T-cell (primary cell): ENCODE measurements at regions of chr1 and their contacts with region 1.

Region 1: DNA sequence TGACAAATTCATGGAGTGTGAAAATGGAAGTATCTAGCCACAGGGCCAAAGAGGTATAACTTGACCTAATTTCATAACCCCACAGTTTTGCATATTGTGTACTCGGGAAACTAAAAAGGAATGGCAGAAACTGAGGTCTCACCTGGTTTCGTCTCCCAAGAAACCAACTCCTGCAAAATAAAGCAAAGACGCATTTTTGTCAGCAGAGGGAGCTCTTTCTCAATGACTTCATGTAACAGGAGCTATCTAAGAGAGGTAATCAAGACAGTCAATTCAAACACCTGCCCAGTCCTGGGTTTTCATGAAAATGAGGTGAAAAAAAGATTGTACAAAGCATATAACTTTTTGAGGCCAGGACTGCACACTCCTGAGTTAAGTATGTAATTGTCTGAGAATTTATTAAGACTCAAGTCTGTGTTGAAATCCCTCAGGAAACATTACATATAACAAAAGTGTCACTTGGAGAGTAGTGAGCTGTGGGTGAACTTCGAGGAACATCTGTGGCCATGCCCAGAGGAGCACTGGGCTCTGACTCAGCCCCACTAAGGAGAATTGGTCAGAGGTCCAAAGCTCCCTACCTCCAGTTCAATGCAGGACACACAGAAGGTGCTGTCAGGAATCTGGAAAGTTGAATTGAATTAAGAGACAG is 17.6 kb downstream of the FCRL4 start:
- DNase-seq: peak in 14 of 35 experiments; percentile 2 to 70 (median 12)
- ATAC-seq: no peak
- H3K4me3 ChIP-seq: no peak overlapping the region
- H3K4me3 Mint-ChIP-seq: no peak overlapping the region
- H3K27ac ChIP-seq: no peak overlapping the region
- H3K27ac Mint-ChIP-seq: no peak overlapping the region
- H3K4me1 ChIP-seq: peaks cover 0 to 2% of the 10 kb centered on the region in 2 experiments
- H3K4me1 Mint-ChIP-seq: peaks cover 2 to 4% (median 2%) of the 10 kb centered on the region in 3 donors
- H3K27me3 ChIP-seq: no peaks in the 10 kb centered on the region
- H3K27me3 Mint-ChIP-seq: peaks cover 1 to 11% of the 10 kb centered on the region in 2 donors

Region 2: DNA sequence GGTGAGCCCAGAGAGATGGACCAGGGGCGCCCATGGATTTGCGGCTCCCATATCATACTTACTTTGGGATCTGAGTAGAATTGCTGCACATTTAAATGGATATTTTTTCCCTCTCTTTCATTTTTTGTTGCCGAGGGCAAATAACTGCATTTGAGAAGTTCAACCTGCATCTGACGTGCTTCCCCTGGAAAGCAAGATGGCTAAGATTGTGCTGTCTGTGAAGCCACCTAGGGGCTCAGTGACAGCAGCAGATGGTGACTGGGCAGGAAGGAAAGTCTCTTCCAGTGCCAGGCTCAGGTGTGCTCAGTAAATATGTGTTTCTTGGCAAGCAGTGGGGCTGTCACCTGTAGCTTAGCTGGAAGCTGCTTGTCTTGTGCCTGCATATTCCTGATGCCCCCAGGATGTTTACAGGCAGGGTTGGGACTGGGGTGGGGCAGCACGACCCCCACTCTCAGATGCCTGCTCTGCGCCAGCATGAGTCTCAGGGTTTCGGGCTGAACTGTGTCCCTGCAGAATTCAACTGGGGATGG is 382.3 kb before region 1 on chr1:
- CTCF ChIA-PET with region 1: no interaction called
- POLR2A ChIA-PET with region 1: interaction called in 1 of 2 experiments, 18 read pairs
- DNase-seq: no peak
- ATAC-seq: no peak
- H3K4me3 ChIP-seq: no peak overlapping the region
- H3K4me3 Mint-ChIP-seq: no peak overlapping the region
- H3K27ac ChIP-seq: no peak overlapping the region
- H3K27ac Mint-ChIP-seq: no peak overlapping the region
- H3K4me1 ChIP-seq: no peaks in the 10 kb centered on the region
- H3K4me1 Mint-ChIP-seq: peaks cover 5 to 8% (median 7%) of the 10 kb centered on the region in 3 donors
- H3K27me3 ChIP-seq: peaks cover 0 to 32% of the 10 kb centered on the region in 2 experiments
- H3K27me3 Mint-ChIP-seq: peaks cover 25 to 29% of the 10 kb centered on the region in 2 donors

Region 3: GRCh38 chr1:157523774-157524493 is 56.4 kb before region 1 on chr1:
- CTCF ChIA-PET with region 1: no interaction called
- POLR2A ChIA-PET with region 1: no interaction called
- DNase-seq: no peak
- ATAC-seq: no peak
- H3K4me3 ChIP-seq: no peak overlapping the region
- H3K4me3 Mint-ChIP-seq: peak overlapping the region; percentile 11 to 23 (median 12)
- H3K27ac ChIP-seq: no peak overlapping the region
- H3K27ac Mint-ChIP-seq: no peak overlapping the region
- H3K4me1 ChIP-seq: no peaks in the 10 kb centered on the region
- H3K4me1 Mint-ChIP-seq: peaks cover 0 to 8% (median 8%) of the 10 kb centered on the region in 3 donors
- H3K27me3 ChIP-seq: peaks cover 0 to 3% of the 10 kb centered on the region in 2 experiments
- H3K27me3 Mint-ChIP-seq: peaks cover 4 to 6% of the 10 kb centered on the region in 2 donors

Region 4: GRCh38 chr1:157551694-157552637 is 28.3 kb before region 1 on chr1 and contains the start of gene FCRL5:
- CTCF ChIA-PET with region 1: no interaction called
- POLR2A ChIA-PET with region 1: no interaction called
- DNase-seq: no peak
- ATAC-seq: no peak
- H3K4me3 ChIP-seq: no peak within 1 kb of the TSS
- H3K4me3 Mint-ChIP-seq: peak within 1 kb of the TSS in 1 of 3 donors; percentile 45
- H3K27ac ChIP-seq: no peak within 1 kb of the TSS
- H3K27ac Mint-ChIP-seq: no peak within 1 kb of the TSS
- H3K4me1 ChIP-seq: peaks cover 0 to 3% of the 10 kb centered on the region in 2 experiments
- H3K4me1 Mint-ChIP-seq: peaks cover 2 to 11% (median 2%) of the 10 kb centered on the region in 3 donors
- H3K27me3 ChIP-seq: peaks cover 0 to 5% of the 10 kb centered on the region in 2 experiments
- H3K27me3 Mint-ChIP-seq: peaks cover 4 to 6% of the 10 kb centered on the region in 2 donors
- total RNA-seq, gene FCRL5: 0.28 to 1.6 (median 0.76) TPM

Region 5: DNA sequence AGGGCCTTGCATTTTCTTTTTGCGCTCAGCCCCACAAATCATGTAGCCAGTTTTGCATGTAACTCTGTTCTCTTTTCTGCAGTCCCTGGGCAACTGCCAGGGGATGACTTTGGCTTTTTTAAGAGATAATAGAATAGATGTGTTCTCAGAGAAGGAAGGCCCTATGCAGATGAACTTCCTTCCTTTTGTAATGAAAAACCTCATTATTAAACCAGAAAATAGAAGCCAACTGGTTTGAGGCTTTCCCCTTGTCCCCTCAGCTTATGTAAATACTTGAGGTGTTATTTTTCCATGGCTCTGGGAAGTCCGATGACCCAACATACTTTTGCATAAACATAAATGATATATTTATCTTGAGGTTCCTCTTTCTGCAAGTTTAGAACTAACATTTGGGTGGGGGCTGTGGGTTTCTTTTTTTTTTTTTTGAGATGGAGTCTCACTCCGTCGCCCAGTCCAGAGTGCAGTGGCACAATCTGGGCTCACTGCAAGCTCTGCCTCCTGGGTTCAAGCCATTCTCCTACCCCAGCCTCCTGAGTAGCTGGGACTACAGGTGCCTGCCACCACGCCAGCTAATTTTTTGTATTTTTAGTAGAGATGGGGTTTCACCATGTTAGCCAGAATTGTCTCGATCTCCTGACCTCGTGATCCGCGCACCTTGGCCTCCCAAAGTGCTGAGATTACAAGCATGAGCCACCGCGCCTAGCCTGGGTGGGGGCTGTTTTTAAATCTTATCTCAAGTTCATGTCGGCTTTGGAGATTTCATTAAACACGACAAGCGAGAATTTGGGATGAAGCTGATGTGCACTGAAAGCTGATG is 13.6 kb before region 1 on chr1:
- CTCF ChIA-PET with region 1: interaction called, 3 to 10 read pairs
- POLR2A ChIA-PET with region 1: no interaction called
- DNase-seq: no peak
- ATAC-seq: no peak
- H3K4me3 ChIP-seq: no peak overlapping the region
- H3K4me3 Mint-ChIP-seq: no peak overlapping the region
- H3K27ac ChIP-seq: no peak overlapping the region
- H3K27ac Mint-ChIP-seq: no peak overlapping the region
- H3K4me1 ChIP-seq: no peaks in the 10 kb centered on the region
- H3K4me1 Mint-ChIP-seq: peaks cover 0 to 6% (median 5%) of the 10 kb centered on the region in 3 donors
- H3K27me3 ChIP-seq: peaks cover 0 to 2% of the 10 kb centered on the region in 2 experiments
- H3K27me3 Mint-ChIP-seq: peaks cover 17 to 25% of the 10 kb centered on the region in 2 donors

Region 6: GRCh38 chr1:157691285-157691920 is 111.1 kb after region 1 on chr1:
- CTCF ChIA-PET with region 1: interaction called, 4 to 13 read pairs
- POLR2A ChIA-PET with region 1: no interaction called
- DNase-seq: peak in 1 of 35 experiments; percentile 18
- ATAC-seq: no peak
- H3K4me3 ChIP-seq: no peak overlapping the region
- H3K4me3 Mint-ChIP-seq: no peak overlapping the region
- H3K27ac ChIP-seq: no peak overlapping the region
- H3K27ac Mint-ChIP-seq: no peak overlapping the region
- H3K4me1 ChIP-seq: peaks cover 0 to 12% of the 10 kb centered on the region in 2 experiments
- H3K4me1 Mint-ChIP-seq: peaks cover 0 to 8% (median 0%) of the 10 kb centered on the region in 3 donors
- H3K27me3 ChIP-seq: no peaks in the 10 kb centered on the region
- H3K27me3 Mint-ChIP-seq: peaks cover 0 to 1% of the 10 kb centered on the region in 2 donors

Region 7: GRCh38 chr1:157773493-157774350 is 193.4 kb after region 1 on chr1:
- CTCF ChIA-PET with region 1: interaction called, 3 to 22 read pairs
- POLR2A ChIA-PET with region 1: no interaction called
- DNase-seq: peak in 3 of 35 experiments; percentile 3 to 43 (median 7)
- ATAC-seq: peak in 2 of 4 experiments; percentile 38 to 53
- H3K4me3 ChIP-seq: no peak overlapping the region
- H3K4me3 Mint-ChIP-seq: no peak overlapping the region
- H3K27ac ChIP-seq: no peak overlapping the region
- H3K27ac Mint-ChIP-seq: no peak overlapping the region
- H3K4me1 ChIP-seq: peaks cover 0 to 5% of the 10 kb centered on the region in 2 experiments
- H3K4me1 Mint-ChIP-seq: peaks cover 0 to 14% (median 0%) of the 10 kb centered on the region in 3 donors
- H3K27me3 ChIP-seq: peaks cover 0 to 5% of the 10 kb centered on the region in 2 experiments
- H3K27me3 Mint-ChIP-seq: peaks cover 0 to 1% of the 10 kb centered on the region in 2 donors

Region 8: DNA sequence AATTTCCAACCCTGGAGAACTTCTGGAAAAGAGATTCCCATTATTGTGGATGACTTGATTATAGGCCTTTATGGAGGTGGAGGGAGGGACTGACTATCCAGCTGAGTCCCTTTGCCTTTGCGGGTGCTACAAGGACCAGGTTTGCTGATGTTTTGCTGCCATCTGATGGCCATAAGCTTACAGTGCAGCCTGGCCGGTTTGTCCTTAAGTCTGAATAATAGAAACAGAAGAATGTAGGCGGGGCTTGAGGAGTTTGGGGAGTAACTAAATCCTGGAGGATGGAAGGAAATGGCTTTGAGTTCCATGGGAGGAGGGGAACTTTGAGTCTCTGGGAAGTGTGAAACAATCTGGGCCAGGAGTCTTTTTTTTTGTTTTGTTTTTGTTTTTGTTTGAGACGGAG is 544.7 kb after region 1 on chr1:
- CTCF ChIA-PET with region 1: interaction called, 9 to 24 read pairs
- POLR2A ChIA-PET with region 1: no interaction called
- DNase-seq: peak; percentile 22 to 84 (median 58)
- ATAC-seq: peak; percentile 75 to 88 (median 84)
- H3K4me3 ChIP-seq: no peak overlapping the region
- H3K4me3 Mint-ChIP-seq: no peak overlapping the region
- H3K27ac ChIP-seq: no peak overlapping the region
- H3K27ac Mint-ChIP-seq: no peak overlapping the region
- H3K4me1 ChIP-seq: no peaks in the 10 kb centered on the region
- H3K4me1 Mint-ChIP-seq: no peaks in the 10 kb centered on the region
- H3K27me3 ChIP-seq: peaks cover 0 to 21% of the 10 kb centered on the region in 2 experiments
- H3K27me3 Mint-ChIP-seq: peaks cover 20 to 42% of the 10 kb centered on the region in 2 donors